ENCODE measurements at regions of chr20 and their contacts with region 1.

Region 1: GRCh38 chr20:45306431-45306982 is at the start of gene RBPJL:
- DNase-seq: peak; percentile 79
- ATAC-seq: peak; percentile 8; the same call in 1 of the 2 replicates
- H3K4me3 Mint-ChIP-seq: 0 out of 2 replicates have a peak within 1 kb of the TSS, but pooled peaks have one; percentile 22
- H3K27ac Mint-ChIP-seq: no peak within 1 kb of the TSS
- H3K4me1 Mint-ChIP-seq: peaks cover 22% of the 10 kb centered on the region
- H3K27me3 Mint-ChIP-seq: peaks cover 30% of the 10 kb centered on the region
- CTCF ChIP-seq: peak; percentile 99
- total RNA-seq, gene RBPJL: 0.78 to 0.85 TPM (median 0.80 TPM) in 3 replicates

Region 2: GRCh38 chr20:44800398-44801046 is 506.0 kb before region 1 on chr20:
- CTCF ChIA-PET with region 1: no interaction called
- POLR2A ChIA-PET with region 1: no interaction called
- DNase-seq: peak; percentile 63
- ATAC-seq: peak; percentile 74
- H3K4me3 Mint-ChIP-seq: no peak overlapping the region
- H3K27ac Mint-ChIP-seq: no peak overlapping the region
- H3K4me1 Mint-ChIP-seq: peaks cover 17% of the 10 kb centered on the region
- H3K27me3 Mint-ChIP-seq: no peaks in the 10 kb centered on the region
- CTCF ChIP-seq: no peak; the same call in 1 of the 2 replicates

Region 3: GRCh38 chr20:45206746-45207145 is 99.8 kb before region 1 on chr20 and contains the start of gene SEMG1:
- CTCF ChIA-PET with region 1: no interaction called
- POLR2A ChIA-PET with region 1: no interaction called
- DNase-seq: no peak
- ATAC-seq: no peak
- H3K4me3 Mint-ChIP-seq: no peak within 1 kb of the TSS
- H3K27ac Mint-ChIP-seq: no peak within 1 kb of the TSS
- H3K4me1 Mint-ChIP-seq: peaks cover 48% of the 10 kb centered on the region
- H3K27me3 Mint-ChIP-seq: peaks cover 14% of the 10 kb centered on the region
- CTCF ChIP-seq: no peak
- total RNA-seq, gene SEMG1: 2.0 to 2.9 TPM (median 2.1 TPM) in 3 replicates

Region 4: DNA sequence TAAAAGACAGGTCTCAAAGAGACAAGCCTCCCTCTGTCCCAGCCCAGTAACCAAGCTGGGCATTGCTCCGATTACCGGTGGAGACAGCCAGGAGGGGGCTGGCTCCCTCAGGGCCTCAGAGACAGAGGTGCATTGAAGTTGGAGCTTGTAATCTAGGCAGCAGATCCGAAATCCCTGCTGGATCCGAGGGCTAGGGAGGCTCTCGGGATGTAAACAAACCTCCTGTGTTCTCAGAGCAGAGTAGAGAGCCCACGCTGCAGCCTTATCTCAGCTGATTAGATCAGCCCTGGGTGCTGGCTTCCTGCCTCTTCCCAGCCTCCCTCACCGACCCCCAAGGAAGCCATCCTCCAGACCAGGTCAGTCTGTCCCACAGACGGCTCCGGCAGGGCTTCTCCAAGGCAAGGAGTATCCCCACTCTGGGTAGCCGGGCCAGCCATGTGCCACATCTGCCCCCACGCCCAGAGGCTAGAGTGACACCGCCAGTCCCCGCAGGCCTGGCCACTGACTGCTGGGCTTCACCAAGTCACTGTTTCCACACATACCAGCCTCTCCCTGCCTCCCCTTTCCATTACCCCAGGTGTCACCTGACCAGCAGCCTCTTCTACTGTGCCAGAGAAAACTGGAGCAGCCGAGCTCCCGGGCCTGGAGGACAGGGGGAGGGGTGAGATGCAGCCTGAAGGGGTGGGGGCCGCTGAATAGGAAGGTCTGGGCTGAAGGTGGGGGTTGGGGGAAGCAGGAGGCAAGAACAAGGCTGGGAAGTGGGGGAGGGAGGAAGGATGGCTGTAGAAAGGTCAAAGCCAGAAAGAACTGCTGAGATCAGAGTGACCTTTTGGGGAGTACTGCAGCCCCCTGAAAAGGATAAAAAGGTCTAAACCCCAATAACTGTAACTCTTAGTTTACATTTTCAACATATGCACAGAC is 35.7 kb after region 1 on chr20:
- CTCF ChIA-PET with region 1: interaction called, 11 read pairs
- POLR2A ChIA-PET with region 1: no interaction called
- DNase-seq: peak; percentile 82
- ATAC-seq: peak; percentile 72
- H3K4me3 Mint-ChIP-seq: peak overlapping the region; percentile 65
- H3K27ac Mint-ChIP-seq: peak overlapping the region; percentile 98
- H3K4me1 Mint-ChIP-seq: peaks cover 99% of the 10 kb centered on the region
- H3K27me3 Mint-ChIP-seq: no peaks in the 10 kb centered on the region
- CTCF ChIP-seq: no peak

Region 5: GRCh38 chr20:45611054-45611453 is 304.5 kb after region 1 on chr20:
- CTCF ChIA-PET with region 1: no interaction called
- POLR2A ChIA-PET with region 1: no interaction called
- DNase-seq: no peak
- ATAC-seq: no peak
- H3K4me3 Mint-ChIP-seq: no peak overlapping the region
- H3K27ac Mint-ChIP-seq: no peak overlapping the region
- H3K4me1 Mint-ChIP-seq: peaks cover 15% of the 10 kb centered on the region
- H3K27me3 Mint-ChIP-seq: no peaks in the 10 kb centered on the region; the same call in 1 of the 2 replicates
- CTCF ChIP-seq: no peak

Measured in WTC11 (cell line).